MCF 10A (cell line): ENCODE measurements at regions of chr3 and their contacts with region 1.

Region 1: DNA sequence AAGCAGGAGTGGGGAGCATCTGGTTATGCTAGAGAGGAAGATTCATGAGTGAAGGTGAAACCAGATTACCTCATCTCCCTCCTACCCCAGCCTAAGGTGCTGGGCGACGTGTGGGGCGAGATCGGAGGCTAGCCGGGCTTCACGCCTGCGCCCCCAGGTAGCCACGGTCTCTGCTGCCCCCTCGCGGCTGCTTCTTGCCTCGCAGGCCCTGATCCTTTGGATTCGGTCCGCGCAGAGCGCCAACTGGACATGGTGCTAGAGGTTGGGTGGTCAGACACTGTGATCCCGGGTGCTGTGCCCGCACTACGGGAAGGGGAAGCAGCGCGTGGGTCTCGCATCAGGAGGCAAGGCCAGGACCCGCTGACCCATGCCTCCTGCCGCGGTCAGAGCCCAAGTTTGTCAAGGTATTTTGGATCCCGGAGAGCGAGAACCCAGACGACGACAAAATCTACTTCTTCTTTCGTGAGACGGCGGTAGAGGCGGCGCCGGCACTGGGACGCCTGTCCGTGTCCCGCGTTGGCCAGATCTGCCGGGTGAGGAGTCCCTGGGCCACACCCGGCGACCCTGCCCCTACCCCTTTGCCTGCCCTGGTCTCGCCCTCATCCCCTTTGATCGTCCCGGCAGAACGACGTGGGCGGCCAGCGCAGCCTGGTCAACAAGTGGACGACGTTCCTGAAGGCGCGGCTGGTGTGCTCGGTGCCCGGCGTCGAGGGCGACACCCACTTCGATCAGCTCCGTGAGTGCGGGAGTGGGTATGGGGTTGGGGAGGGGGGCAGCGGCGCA is 4.2 kb downstream of the SEMA3B start:
- DNase-seq: peak; percentile 85
- H3K4me3 Mint-ChIP-seq: peak overlapping the region; percentile 45
- H3K27ac Mint-ChIP-seq: no peak overlapping the region
- H3K4me1 Mint-ChIP-seq: peaks cover 42% of the 10 kb centered on the region
- H3K27me3 Mint-ChIP-seq: no peaks in the 10 kb centered on the region
- CTCF ChIP-seq: peak; percentile 94

Region 2: GRCh38 chr3:50245831-50246516 is 27.1 kb before region 1 on chr3:
- CTCF ChIA-PET with region 1: interaction called, 8 read pairs
- POLR2A ChIA-PET with region 1: interaction called, 4 read pairs
- intact Hi-C with region 1: loop called (anchors 1 kb)
- DNase-seq: peak; percentile 91
- H3K4me3 Mint-ChIP-seq: peak overlapping the region; percentile 55
- H3K27ac Mint-ChIP-seq: peak overlapping the region; percentile 91
- H3K4me1 Mint-ChIP-seq: peaks cover 54% of the 10 kb centered on the region
- H3K27me3 Mint-ChIP-seq: no peaks in the 10 kb centered on the region
- CTCF ChIP-seq: peak; percentile 98

Region 3: DNA sequence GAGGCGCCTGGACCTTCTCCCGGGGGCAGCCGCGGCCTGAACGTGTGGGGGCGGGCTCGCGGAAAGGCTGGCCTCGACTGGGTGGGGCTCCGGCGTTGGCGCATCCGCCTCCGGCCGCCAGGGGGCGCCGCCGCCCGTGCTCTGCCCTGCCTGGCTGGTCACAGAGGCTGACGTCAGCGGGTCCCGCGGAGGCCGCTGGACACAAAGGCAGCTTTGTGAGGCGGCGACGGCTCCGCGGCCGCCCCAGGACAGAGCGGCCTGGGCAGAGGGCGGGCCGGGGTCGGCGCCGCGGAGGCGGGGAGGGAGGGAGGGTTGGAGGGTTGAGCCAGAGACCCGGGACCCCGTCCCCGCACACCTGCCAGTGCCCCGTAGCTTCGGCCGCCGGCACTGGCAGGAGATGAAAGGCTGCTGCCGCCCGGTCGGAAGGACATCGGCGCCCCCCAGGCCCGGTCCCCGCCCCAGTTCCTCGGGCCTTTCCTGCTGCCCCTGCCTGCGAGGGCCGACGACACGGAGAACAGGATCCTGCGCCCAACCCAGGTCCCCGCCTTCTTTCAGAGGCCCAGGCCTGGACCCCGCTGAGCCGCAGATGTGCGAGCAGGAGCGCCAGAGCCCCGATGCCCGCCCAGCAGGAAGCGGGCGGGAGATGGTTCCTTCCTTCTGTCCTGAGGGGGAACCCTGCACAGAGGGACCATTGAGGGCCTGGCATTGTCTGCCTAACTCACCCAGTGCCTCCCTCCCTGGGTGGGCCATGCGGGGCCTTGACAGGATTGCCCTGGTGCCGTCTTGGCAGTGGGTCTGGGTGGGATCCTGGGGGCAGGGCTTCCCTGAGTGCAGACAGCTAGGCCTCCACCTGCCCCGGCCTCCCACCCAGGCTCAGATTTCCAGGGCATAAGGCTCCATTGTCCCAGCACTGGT is 12.8 kb before region 1 on chr3:
- CTCF ChIA-PET with region 1: interaction called, 38 read pairs
- POLR2A ChIA-PET with region 1: interaction called, 16 read pairs
- intact Hi-C with region 1: loop called (anchors 1 kb)
- DNase-seq: peak; percentile 85
- H3K4me3 Mint-ChIP-seq: peak overlapping the region; percentile 62
- H3K27ac Mint-ChIP-seq: peak overlapping the region; percentile 63
- H3K4me1 Mint-ChIP-seq: no peaks in the 10 kb centered on the region
- H3K27me3 Mint-ChIP-seq: no peaks in the 10 kb centered on the region
- CTCF ChIP-seq: peak; percentile 98

Region 4: GRCh38 chr3:50286322-50287230 is 13.5 kb after region 1 on chr3:
- CTCF ChIA-PET with region 1: interaction called, 10 read pairs
- POLR2A ChIA-PET with region 1: interaction called, 7 read pairs
- intact Hi-C with region 1: no loop called
- DNase-seq: no peak
- H3K4me3 Mint-ChIP-seq: no peak overlapping the region
- H3K27ac Mint-ChIP-seq: no peak overlapping the region
- H3K4me1 Mint-ChIP-seq: peaks cover 6% of the 10 kb centered on the region
- H3K27me3 Mint-ChIP-seq: no peaks in the 10 kb centered on the region
- CTCF ChIP-seq: no peak

Region 5: DNA sequence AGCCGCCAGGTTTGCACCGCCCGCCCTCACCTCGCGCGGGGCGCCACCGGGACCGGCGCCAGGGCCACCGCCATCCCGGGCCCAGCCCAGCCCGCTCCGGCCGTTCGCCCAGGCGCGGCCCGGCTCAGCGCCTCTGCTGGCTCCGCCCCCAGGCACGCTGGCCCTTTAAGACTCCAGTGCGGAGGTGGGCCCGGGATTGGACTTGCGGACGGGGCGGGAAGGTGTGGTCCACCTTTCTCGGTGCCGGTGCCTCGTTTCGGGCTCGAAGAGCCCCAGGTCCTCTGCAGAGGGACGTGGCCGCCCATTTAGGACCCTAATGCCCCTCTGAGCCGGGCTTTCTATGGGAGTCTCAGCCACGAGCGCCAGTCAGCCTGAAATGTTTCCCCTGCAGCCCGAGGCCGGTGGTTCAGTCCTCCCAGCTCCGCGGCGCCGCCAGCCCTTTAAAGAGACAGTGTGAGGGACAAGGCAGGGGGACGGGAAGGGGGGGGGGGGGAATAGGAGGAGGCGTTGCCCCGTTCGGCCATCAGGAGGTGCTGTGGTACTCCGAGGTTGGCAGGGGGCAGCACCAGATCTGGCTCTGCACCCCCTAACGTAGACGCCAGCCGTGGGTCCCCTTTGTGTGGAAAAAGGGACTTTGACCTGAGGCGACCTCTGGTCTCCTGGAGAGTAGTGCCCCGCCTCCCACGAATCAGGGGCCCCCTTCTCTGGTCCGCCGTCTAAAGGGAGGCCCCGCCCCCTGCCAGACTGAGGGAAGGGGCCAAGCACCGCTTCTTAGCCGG is 48.4 kb after region 1 on chr3:
- CTCF ChIA-PET with region 1: interaction called, 19 read pairs
- POLR2A ChIA-PET with region 1: no interaction called
- intact Hi-C with region 1: loop called (anchors 1 kb)
- DNase-seq: peak; percentile 89
- H3K4me3 Mint-ChIP-seq: peak overlapping the region; percentile 80
- H3K27ac Mint-ChIP-seq: peak overlapping the region; percentile 98
- H3K4me1 Mint-ChIP-seq: peaks cover 17% of the 10 kb centered on the region
- H3K27me3 Mint-ChIP-seq: no peaks in the 10 kb centered on the region
- CTCF ChIP-seq: peak; percentile 38